ENCODE measurements at regions of chr1 and their contacts with region 1.

Region 1: DNA sequence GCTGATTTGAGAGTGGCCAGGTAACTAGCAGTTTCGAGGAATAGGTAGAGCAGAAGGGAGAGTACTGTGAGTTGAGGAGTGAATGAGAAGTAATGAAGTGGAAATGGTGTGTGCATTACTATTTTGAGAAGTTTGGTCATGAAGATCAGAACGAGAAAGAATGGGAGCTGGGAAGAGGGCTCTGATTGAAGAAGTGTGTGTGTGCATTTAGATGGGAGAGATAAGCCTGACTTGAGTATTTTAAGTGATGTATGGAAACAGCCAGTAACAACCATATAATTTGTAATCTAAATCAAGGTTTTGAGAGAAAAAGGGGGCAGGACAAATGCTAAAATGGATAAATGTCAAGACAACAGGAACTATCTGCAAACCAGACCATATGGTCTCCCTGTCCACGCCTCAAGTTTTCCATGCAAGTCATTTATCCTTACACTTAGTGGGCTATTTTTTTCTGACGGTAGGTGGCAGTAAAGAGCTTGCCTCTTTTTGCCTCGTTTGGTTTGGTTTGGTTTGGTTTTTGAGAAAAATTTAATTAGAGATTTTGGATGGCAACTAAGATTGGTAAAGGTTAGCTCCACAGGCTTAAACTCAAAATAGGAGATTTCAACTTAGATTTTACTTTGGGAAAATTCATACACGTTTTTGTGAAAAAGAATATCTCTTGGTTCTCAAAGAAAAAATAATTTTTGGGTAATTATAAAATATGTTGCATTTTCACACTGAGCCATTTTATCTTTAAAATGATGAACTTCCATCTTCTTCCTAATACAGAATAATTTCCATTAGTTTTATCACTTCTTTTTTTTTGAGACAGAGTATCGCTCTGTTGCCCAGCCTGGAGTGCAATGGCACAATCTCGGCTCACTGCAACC is 9.5 kb upstream of the B3GALNT2 start:
- DNase-seq: peak; percentile 94
- H3K4me3 Mint-ChIP-seq: no peak overlapping the region
- H3K27ac Mint-ChIP-seq: no peak overlapping the region
- H3K4me1 Mint-ChIP-seq: peaks cover 6% of the 10 kb centered on the region
- H3K27me3 Mint-ChIP-seq: no peaks in the 10 kb centered on the region
- CTCF ChIP-seq: peak; percentile 98

Region 2: GRCh38 chr1:235486321-235486720 is 27.4 kb before region 1 on chr1:
- CTCF ChIA-PET with region 1: no interaction called
- POLR2A ChIA-PET with region 1: no interaction called
- intact Hi-C with region 1: no loop called
- DNase-seq: no peak
- H3K4me3 Mint-ChIP-seq: no peak overlapping the region
- H3K27ac Mint-ChIP-seq: no peak overlapping the region
- H3K4me1 Mint-ChIP-seq: no peaks in the 10 kb centered on the region
- H3K27me3 Mint-ChIP-seq: no peaks in the 10 kb centered on the region
- CTCF ChIP-seq: no peak

Region 3: DNA sequence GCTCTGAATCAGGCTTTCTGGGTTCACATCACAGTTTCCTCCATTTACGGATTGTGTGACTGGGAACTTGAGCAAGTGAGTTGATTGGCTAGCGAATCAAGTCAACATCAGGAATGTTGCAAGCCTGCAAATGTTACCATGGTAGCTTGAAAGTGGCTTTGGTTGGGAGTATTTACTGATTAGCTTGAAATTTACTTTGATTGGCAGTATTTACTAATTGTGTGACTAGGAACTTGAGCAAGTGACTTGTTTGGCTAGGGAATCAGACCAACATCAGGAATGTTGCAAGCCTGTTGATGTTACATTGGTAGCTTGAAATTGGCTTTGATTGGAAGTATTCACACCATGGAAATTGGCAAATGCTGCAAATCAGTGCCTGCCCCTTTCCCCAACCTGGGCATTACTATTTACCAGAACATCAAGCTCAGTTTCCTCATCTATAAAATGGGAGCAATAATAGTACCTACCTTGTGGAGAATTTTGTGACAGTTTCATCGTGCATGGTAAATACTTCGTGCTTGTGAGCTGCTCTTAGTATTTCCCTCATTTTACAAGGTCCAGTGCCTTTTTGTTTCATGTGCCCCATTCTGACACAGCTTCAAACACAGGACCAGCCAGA is 13.6 kb after region 1 on chr1:
- CTCF ChIA-PET with region 1: interaction called, 39 read pairs
- POLR2A ChIA-PET with region 1: interaction called, 4 read pairs
- intact Hi-C with region 1: no loop called
- DNase-seq: no peak
- H3K4me3 Mint-ChIP-seq: no peak overlapping the region
- H3K27ac Mint-ChIP-seq: no peak overlapping the region
- H3K4me1 Mint-ChIP-seq: peaks cover 11% of the 10 kb centered on the region
- H3K27me3 Mint-ChIP-seq: no peaks in the 10 kb centered on the region
- CTCF ChIP-seq: no peak

Region 4: GRCh38 chr1:235758931-235759330 is 245.2 kb after region 1 on chr1:
- CTCF ChIA-PET with region 1: interaction called, 10 read pairs
- POLR2A ChIA-PET with region 1: interaction called, 3 read pairs
- intact Hi-C with region 1: no loop called
- DNase-seq: peak; percentile 100
- H3K4me3 Mint-ChIP-seq: no peak overlapping the region
- H3K27ac Mint-ChIP-seq: no peak overlapping the region
- H3K4me1 Mint-ChIP-seq: peaks cover 12% of the 10 kb centered on the region
- H3K27me3 Mint-ChIP-seq: no peaks in the 10 kb centered on the region
- CTCF ChIP-seq: no peak

Region 5: GRCh38 chr1:235946571-235946981 is 432.8 kb after region 1 on chr1:
- CTCF ChIA-PET with region 1: no interaction called
- POLR2A ChIA-PET with region 1: no interaction called
- intact Hi-C with region 1: loop called (anchors 1 kb)
- DNase-seq: peak; percentile 77
- H3K4me3 Mint-ChIP-seq: no peak overlapping the region
- H3K27ac Mint-ChIP-seq: no peak overlapping the region
- H3K4me1 Mint-ChIP-seq: peaks cover 47% of the 10 kb centered on the region
- H3K27me3 Mint-ChIP-seq: no peaks in the 10 kb centered on the region
- CTCF ChIP-seq: peak; percentile 75

Region 6: GRCh38 chr1:236083650-236084385 is 570.1 kb after region 1 on chr1:
- CTCF ChIA-PET with region 1: no interaction called
- POLR2A ChIA-PET with region 1: no interaction called
- intact Hi-C with region 1: loop called (anchors 10 kb)
- DNase-seq: peak; percentile 34
- H3K4me3 Mint-ChIP-seq: peak overlapping the region; percentile 58
- H3K27ac Mint-ChIP-seq: peak overlapping the region; percentile 17
- H3K4me1 Mint-ChIP-seq: peaks cover 11% of the 10 kb centered on the region
- H3K27me3 Mint-ChIP-seq: no peaks in the 10 kb centered on the region
- CTCF ChIP-seq: no peak

Measured in MCF 10A (cell line).